PC-9 (cell line): ENCODE measurements at regions of chr3 and their contacts with region 1.

Region 1: GRCh38 chr3:69161587-69162307 is 39.4 kb upstream of the LMOD3 start:
- DNase-seq: peak; percentile 29 to 47
- H3K4me3 ChIP-seq: no peak overlapping the region
- H3K27ac ChIP-seq: no peak overlapping the region
- H3K4me1 ChIP-seq: peaks cover 15% of the 10 kb centered on the region; the same call in 1 of the 2 replicates
- H3K27me3 ChIP-seq: no peaks in the 10 kb centered on the region
- CTCF ChIP-seq: peak; percentile 92

Region 2: DNA sequence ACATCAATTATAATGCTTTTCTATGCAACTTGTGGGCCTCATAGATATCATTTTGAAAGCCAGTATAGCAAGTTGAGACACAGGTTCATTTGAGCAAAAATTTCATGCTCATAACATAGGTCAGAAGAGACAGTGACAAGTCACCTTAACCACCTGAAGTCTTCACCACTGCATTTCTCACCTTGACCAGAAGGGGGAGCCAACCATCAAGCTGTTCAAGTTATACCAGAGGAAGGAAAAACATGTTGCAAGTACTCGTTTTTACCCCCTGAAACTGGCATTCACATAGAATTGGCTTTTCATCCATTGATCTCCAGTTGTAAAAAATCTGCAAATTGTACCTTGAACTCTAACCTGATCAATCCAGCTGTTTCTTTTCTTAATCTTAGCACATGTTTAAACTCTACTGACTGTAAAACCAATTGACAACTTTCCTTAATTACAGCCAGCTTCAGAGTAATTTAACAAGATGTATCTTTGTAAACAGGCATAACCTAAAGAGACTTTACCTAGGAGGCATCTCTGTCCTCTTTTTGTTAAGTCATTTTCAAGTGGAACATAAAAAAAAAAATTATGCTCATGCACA is 40.8 kb before region 1 on chr3:
- CTCF ChIA-PET with region 1: interaction called, 13 read pairs
- POLR2A ChIA-PET with region 1: no interaction called
- intact Hi-C with region 1: loop called (anchors 5 kb)
- DNase-seq: peak; percentile 64 to 77
- H3K4me3 ChIP-seq: no peak overlapping the region
- H3K27ac ChIP-seq: no peak overlapping the region
- H3K4me1 ChIP-seq: peaks cover 18% of the 10 kb centered on the region
- H3K27me3 ChIP-seq: no peaks in the 10 kb centered on the region
- CTCF ChIP-seq: peak; percentile 83

Region 3: GRCh38 chr3:69174871-69175737 is 13.4 kb after region 1 on chr3:
- CTCF ChIA-PET with region 1: no interaction called
- POLR2A ChIA-PET with region 1: no interaction called
- intact Hi-C with region 1: no loop called
- DNase-seq: no peak
- H3K4me3 ChIP-seq: no peak overlapping the region
- H3K27ac ChIP-seq: no peak overlapping the region
- H3K4me1 ChIP-seq: peaks cover 27% of the 10 kb centered on the region
- H3K27me3 ChIP-seq: no peaks in the 10 kb centered on the region
- CTCF ChIP-seq: no peak

Region 4: DNA sequence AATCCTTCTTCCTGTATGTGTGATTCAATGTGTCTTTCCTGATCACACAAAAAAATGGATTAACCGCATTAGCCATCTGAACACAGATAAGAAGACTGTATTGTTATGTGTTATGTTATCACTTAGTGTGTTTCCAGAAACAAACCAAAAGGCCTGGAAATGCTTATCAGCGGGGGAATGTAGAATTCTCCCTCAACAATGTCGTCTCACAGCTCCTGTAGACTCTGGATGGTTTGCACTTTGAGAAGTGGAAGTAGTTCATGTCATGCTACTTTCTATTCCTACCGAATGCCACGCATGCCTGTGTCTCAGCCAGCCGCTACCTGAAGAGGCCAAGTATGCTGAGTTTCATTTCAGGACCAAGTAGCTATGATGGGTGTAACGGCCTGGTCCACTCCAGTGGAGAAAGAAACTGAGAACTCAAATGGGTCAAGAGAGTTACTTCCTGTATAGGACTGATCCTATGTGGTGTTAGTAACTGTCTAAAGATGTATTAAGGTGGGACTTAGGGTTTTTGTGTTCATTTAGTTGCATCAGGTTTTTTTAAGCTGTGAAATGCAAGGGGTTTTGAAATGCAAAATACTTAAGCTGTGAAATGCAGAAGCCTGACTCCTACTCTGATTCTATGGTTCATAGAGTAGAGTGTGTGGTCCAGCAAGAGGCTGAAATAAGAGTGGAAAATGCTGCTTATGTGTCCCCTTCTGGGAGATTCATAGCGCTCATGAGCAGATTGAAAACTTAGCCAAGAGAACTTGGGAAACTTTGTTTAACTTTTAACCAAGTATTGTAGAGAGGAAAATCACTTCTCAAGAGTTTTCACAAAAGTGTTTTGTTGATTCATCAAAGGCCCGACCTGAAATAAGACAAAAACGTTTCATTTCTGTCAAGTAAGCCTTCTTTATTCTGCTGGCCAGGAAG is 79.2 kb after region 1 on chr3:
- CTCF ChIA-PET with region 1: no interaction called
- POLR2A ChIA-PET with region 1: interaction called, 3 read pairs
- intact Hi-C with region 1: loop called (anchors 1 kb)
- DNase-seq: no peak
- H3K4me3 ChIP-seq: no peak overlapping the region
- H3K27ac ChIP-seq: no peak overlapping the region
- H3K4me1 ChIP-seq: peaks cover 30% of the 10 kb centered on the region
- H3K27me3 ChIP-seq: no peaks in the 10 kb centered on the region
- CTCF ChIP-seq: no peak

Region 5: DNA sequence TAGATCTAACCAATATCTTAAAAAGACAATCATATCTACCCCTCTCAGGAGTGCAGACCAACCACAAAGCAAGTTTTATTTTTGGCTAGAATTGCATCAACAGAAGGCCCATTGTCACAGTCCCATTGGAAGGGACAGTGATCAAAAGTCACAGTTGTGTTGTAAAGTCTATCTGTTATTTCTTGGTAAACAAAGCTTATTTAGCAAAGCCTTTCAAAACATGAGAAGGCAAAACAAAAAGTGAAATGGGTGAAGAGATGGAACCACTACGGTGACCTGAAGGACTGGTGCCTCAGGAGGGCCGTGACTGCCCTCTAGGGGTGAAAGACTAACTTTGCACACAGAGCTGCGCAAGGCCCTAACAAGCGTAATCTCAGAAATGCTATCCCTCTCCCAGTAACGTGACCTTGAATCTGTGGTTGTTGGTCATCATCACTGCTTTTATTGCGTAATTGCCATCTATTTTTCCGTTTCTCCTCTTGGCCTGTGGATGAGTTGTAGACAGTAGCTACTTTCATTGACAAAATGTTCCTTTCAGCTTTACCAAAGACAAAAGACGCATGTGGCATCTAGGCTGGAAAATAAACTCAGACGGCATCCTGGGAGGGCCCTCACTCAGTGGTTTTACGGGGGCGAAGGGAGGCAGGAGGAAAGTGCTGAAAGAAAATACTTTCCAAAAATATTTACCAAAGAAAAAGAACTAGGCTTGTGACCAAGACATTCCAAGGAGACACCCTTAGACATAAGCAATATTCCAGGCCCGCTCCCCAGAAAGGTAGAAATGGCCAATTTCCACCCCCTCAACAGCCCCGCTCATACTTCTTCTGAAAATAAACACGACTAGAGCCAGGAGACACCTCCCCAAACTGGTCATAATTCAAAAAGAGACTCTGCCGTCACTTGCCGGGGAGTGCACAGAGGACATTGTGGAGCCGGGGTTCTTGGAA is 144.8 kb after region 1 on chr3:
- CTCF ChIA-PET with region 1: interaction called, 24 read pairs
- POLR2A ChIA-PET with region 1: no interaction called
- intact Hi-C with region 1: loop called (anchors 1 kb)
- DNase-seq: peak; percentile 58 to 70
- H3K4me3 ChIP-seq: no peak overlapping the region
- H3K27ac ChIP-seq: peak overlapping the region; percentile 29; the same call in 1 of the 2 replicates
- H3K4me1 ChIP-seq: peaks cover 12% of the 10 kb centered on the region; the same call in 1 of the 2 replicates
- H3K27me3 ChIP-seq: no peaks in the 10 kb centered on the region
- CTCF ChIP-seq: peak; percentile 87

Region 6: DNA sequence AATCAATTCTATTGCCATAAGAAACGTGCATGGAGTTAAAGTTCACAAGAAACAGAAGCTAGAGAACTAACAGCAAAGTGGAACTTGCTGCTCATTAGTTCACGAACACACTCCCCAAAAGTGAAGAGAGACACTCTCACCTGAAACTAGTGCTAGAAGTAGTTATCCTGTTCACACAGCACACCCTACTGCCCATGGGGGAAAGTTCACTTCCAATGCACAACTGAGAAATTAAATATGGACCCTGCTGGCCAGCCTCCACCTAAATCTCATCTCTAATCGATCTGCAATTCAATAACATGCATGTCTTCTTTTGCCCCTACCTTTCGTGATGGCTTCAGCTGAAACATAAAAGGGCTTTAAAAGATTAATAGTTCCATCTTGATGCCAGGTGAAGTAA is 263.5 kb after region 1 on chr3:
- CTCF ChIA-PET with region 1: no interaction called
- POLR2A ChIA-PET with region 1: no interaction called
- intact Hi-C with region 1: loop called (anchors 1 kb)
- DNase-seq: peak in 1 of 2 experiments; percentile 34
- H3K4me3 ChIP-seq: no peak overlapping the region
- H3K27ac ChIP-seq: no peak overlapping the region
- H3K4me1 ChIP-seq: no peaks in the 10 kb centered on the region
- H3K27me3 ChIP-seq: no peaks in the 10 kb centered on the region
- CTCF ChIP-seq: peak; percentile 55; the same call in 1 of the 2 replicates

Region 7: GRCh38 chr3:69439643-69440270 is 278.0 kb after region 1 on chr3:
- CTCF ChIA-PET with region 1: no interaction called
- POLR2A ChIA-PET with region 1: no interaction called
- intact Hi-C with region 1: loop called (anchors 1 kb)
- DNase-seq: peak in 1 of 2 experiments; percentile 3
- H3K4me3 ChIP-seq: no peak overlapping the region
- H3K27ac ChIP-seq: no peak overlapping the region
- H3K4me1 ChIP-seq: no peaks in the 10 kb centered on the region
- H3K27me3 ChIP-seq: no peaks in the 10 kb centered on the region
- CTCF ChIP-seq: peak; percentile 68

Region 8: GRCh38 chr3:70028361-70028760 is 866.6 kb after region 1 on chr3:
- CTCF ChIA-PET with region 1: no interaction called
- POLR2A ChIA-PET with region 1: no interaction called
- intact Hi-C with region 1: no loop called
- DNase-seq: no peak
- H3K4me3 ChIP-seq: no peak overlapping the region
- H3K27ac ChIP-seq: no peak overlapping the region
- H3K4me1 ChIP-seq: no peaks in the 10 kb centered on the region
- H3K27me3 ChIP-seq: no peaks in the 10 kb centered on the region
- CTCF ChIP-seq: no peak